ENCODE measurements at regions of chr22 and their contacts with region 1.

Region 1: GRCh38 chr22:18024276-18024947 is at the start of gene MICAL3:
- DNase-seq: peak; percentile 66 to 83 (median 79)
- H3K4me3 ChIP-seq: peak within 1 kb of the TSS; percentile 42 to 86 (median 64)
- H3K27ac ChIP-seq: no peak within 1 kb of the TSS
- H3K4me1 ChIP-seq: peaks cover 0 to 18% (median 14%) of the 10 kb centered on the region in 4 experiments
- H3K27me3 ChIP-seq: peaks cover 2 to 26% (median 14%) of the 10 kb centered on the region in 5 experiments

Region 2: DNA sequence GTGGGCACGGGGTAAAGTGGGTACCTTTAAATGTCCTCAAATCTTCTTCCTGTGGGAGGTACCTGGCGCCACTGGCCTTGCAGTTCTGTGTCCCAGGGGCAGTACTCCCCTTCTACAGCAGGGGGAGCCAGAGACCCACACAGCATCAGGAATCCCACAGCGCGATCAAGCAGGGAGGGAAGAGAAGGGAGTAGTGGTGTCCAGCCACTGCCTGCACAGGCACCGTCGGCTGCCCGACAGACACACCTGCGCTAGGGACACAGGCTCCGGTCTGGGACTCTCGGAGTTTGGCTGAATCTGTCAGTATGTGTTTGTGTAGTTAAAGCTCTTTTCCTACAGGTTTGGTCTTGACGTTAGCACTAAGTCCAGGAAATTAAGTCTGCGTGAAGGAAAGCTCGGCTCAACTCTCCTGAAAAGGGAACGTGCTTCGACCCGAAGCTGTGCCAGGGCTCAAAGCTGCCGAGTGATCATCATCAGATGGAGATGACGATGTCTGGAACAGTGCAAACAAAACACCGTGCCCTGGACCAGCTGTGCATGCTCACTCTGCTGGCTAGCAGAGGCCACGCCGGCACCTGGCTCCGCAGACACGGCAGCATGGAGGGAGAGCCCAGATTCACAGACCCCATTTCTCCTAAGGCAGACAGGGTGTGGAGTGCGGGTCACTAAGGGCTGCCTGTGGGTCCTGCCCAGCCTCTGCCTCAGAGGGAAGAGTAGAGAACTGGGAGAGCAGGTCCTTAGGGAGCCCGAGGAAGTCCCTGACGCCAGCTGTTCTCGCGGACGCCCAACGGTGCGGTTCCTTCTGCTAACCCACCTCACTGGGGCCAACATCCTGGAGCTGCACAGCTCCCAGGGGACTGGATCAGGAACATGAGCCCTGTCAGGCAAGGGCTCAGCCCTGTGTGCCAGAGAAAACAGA is 194.1 kb before region 1 on chr22:
- CTCF ChIA-PET with region 1: interaction called, 11 read pairs
- POLR2A ChIA-PET with region 1: no interaction called
- DNase-seq: peak; percentile 74 to 83 (median 74)
- H3K4me3 ChIP-seq: no peak overlapping the region
- H3K27ac ChIP-seq: no peak overlapping the region
- H3K4me1 ChIP-seq: no peaks in the 10 kb centered on the region
- H3K27me3 ChIP-seq: no peaks in the 10 kb centered on the region

Region 3: GRCh38 chr22:17910561-17911311 is 113.7 kb before region 1 on chr22:
- CTCF ChIA-PET with region 1: no interaction called
- POLR2A ChIA-PET with region 1: no interaction called
- DNase-seq: peak in 1 of 3 donors; percentile 9
- H3K4me3 ChIP-seq: no peak overlapping the region
- H3K27ac ChIP-seq: no peak overlapping the region
- H3K4me1 ChIP-seq: peaks cover 0 to 2% (median 0%) of the 10 kb centered on the region in 4 experiments
- H3K27me3 ChIP-seq: no peaks in the 10 kb centered on the region